ENCODE measurements at regions of chr17 and their contacts with region 1.

Region 1: GRCh38 chr17:57833179-57833939 is 16.5 kb downstream of the MRPS23 start:
- DNase-seq: peak; percentile 55 to 74
- ATAC-seq: peak; percentile 74 to 91 (median 86)
- H3K4me3 ChIP-seq: peak overlapping the region in 9 of 10 donors; percentile 8 to 53 (median 50)
- H3K27ac ChIP-seq: peak overlapping the region; percentile 65 to 91 (median 84)
- H3K4me1 ChIP-seq: peaks cover 0 to 52% (median 20%) of the 10 kb centered on the region in 9 donors
- H3K27me3 ChIP-seq: no peaks in the 10 kb centered on the region
- CTCF ChIP-seq: peak; percentile 82 to 97 (median 92)

Region 2: GRCh38 chr17:56774650-56775049 is 1058.7 kb before region 1 on chr17:
- intact Hi-C with region 1: no loop called
- DNase-seq: no peak
- ATAC-seq: no peak
- H3K4me3 ChIP-seq: no peak overlapping the region
- H3K27ac ChIP-seq: no peak overlapping the region
- H3K4me1 ChIP-seq: peaks cover 0 to 3% (median 1%) of the 10 kb centered on the region in 9 donors
- H3K27me3 ChIP-seq: peaks cover 0 to 46% (median 22%) of the 10 kb centered on the region in 7 donors
- CTCF ChIP-seq: no peak

Region 3: GRCh38 chr17:57130761-57131461 is 702.4 kb before region 1 on chr17:
- intact Hi-C with region 1: loop called in 9 of 10 experiments (anchors 5 to 10 kb)
- DNase-seq: peak; percentile 76 to 88
- ATAC-seq: peak; percentile 91 to 96 (median 94)
- H3K4me3 ChIP-seq: peak overlapping the region in 1 of 10 donors; percentile 11
- H3K27ac ChIP-seq: no peak overlapping the region
- H3K4me1 ChIP-seq: peaks cover 0 to 5% (median 0%) of the 10 kb centered on the region in 9 donors
- H3K27me3 ChIP-seq: no peaks in the 10 kb centered on the region
- CTCF ChIP-seq: peak; percentile 80 to 95 (median 91)

Region 4: GRCh38 chr17:57255776-57256681 is 577.3 kb before region 1 on chr17 and contains the start of gene MSI2:
- intact Hi-C with region 1: loop called in 1 of 10 experiments (anchors 10 kb)
- DNase-seq: peak; percentile 94 to 95
- ATAC-seq: peak; percentile 88 to 94 (median 92)
- H3K4me3 ChIP-seq: peak within 1 kb of the TSS; percentile 75 to 97 (median 93)
- H3K27ac ChIP-seq: peak within 1 kb of the TSS; percentile 88 to 99 (median 97)
- H3K4me1 ChIP-seq: peaks cover 0 to 38% (median 20%) of the 10 kb centered on the region in 9 donors
- H3K27me3 ChIP-seq: peaks cover 0 to 4% (median 0%) of the 10 kb centered on the region in 7 donors
- CTCF ChIP-seq: peak in 1 of 9 donors; percentile 5
- total RNA-seq, gene MSI2: 94.2 to 135 (median 121) TPM

Region 5: DNA sequence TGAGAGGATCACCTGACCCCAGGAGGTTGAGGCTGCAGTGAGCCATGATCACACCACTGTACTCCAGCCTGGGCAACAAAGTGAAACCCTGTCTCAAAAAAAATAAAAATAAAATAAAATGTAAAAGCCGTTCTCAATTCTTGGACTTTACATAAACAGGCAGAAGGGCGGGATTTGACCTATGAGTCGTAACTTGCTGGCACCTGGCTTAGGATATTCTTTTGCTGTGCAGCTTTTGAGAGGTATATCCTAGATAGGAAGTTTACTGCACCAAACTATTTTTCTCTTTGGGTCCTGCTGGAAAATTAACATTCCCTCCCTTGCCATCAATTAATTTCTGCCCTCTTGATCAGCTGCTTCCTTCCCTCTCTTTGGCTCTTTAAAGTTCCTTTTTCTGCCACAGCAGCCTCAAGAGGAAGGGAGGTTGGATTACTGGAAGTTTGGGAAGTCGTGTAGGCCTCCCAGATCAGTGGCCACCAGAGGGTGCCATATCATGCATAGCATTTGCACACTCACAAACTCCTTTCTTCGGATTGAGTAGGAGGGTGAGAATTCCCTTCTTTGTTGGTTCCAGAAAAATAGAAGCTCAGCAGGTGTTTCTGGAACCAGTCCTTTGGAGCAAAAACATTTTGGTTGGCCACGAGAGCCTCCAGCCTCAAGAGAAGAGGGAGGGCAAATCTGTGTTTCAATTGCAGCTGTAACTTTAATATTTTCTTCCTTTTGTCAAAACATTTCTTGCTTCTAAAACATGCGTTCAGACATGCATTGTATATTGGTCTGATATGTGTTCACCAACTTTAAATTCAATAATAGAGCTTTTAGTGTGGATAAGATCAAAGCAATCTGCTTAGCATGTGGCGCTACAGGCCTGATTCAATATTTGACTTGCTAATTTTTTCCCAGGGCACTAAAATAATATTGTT is 235.6 kb before region 1 on chr17:
- intact Hi-C with region 1: loop called in 7 of 10 experiments (anchors 5 to 10 kb)
- DNase-seq: peak; percentile 57 to 81
- ATAC-seq: peak in 7 of 8 donors; percentile 39 to 80 (median 71)
- H3K4me3 ChIP-seq: no peak overlapping the region
- H3K27ac ChIP-seq: peak overlapping the region in 8 of 10 donors; percentile 5 to 65 (median 58)
- H3K4me1 ChIP-seq: peaks cover 0 to 57% (median 34%) of the 10 kb centered on the region in 9 donors
- H3K27me3 ChIP-seq: no peaks in the 10 kb centered on the region
- CTCF ChIP-seq: peak; percentile 67 to 93 (median 85)

Region 6: GRCh38 chr17:57671667-57672632 is 161.4 kb before region 1 on chr17:
- intact Hi-C with region 1: loop called in 2 of 10 experiments (anchors 10 kb)
- DNase-seq: peak; percentile 77 to 81
- ATAC-seq: peak; percentile 89 to 96 (median 92)
- H3K4me3 ChIP-seq: no peak overlapping the region
- H3K27ac ChIP-seq: peak overlapping the region in 5 of 10 donors; percentile 20 to 52 (median 26)
- H3K4me1 ChIP-seq: peaks cover 0 to 37% (median 10%) of the 10 kb centered on the region in 9 donors
- H3K27me3 ChIP-seq: no peaks in the 10 kb centered on the region
- CTCF ChIP-seq: peak; percentile 80 to 98 (median 97)

Region 7: DNA sequence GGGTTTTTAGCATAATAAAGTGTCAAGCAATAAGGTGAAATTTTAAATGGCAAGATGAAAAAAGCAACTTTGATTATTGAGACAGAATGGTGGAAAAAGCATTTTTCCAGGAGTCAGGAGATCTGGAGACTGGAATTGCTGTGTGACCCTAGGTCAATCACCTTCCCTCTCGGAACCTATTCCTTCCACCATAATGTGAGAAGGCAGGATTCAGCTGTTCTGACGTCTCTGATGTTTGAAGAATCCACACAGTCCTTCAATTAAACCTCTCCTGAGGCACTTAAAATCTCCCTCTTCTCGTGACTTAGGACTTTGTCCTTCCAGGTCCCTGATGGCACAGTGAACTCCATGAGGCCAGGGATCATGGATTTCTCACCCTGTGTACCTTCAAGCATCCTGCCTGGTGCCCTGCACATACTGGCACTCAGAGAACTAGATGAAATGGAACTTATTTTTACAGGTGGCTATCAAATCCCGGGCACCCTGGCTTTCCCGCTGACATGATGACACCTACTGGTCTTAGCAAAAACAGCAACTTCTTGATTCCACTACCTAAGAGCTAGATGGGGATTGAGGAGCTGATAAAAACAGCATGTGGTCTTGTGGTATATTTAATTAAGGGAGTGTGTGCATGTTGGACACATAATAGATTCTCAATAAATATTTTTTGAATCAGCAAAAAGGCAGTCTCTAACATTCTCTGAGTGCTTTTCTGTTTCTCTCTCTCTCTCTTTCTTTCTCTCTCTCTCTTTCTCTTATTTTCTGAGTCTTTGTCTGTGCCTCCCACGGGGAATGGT is 85.9 kb before region 1 on chr17:
- intact Hi-C with region 1: loop called in 1 of 10 experiments (anchors 10 kb)
- DNase-seq: peak in 1 of 2 donors; percentile 28
- ATAC-seq: peak in 7 of 8 donors; percentile 32 to 75 (median 56)
- H3K4me3 ChIP-seq: no peak overlapping the region
- H3K27ac ChIP-seq: no peak overlapping the region
- H3K4me1 ChIP-seq: peaks cover 0 to 11% (median 0%) of the 10 kb centered on the region in 9 donors
- H3K27me3 ChIP-seq: no peaks in the 10 kb centered on the region
- CTCF ChIP-seq: peak; percentile 42 to 87 (median 77)

Region 8: GRCh38 chr17:57849874-57850754 is 16.8 kb after region 1 on chr17 and contains the start of gene MRPS23:
- intact Hi-C with region 1: loop called in 2 of 10 experiments (anchors 2 kb)
- DNase-seq: peak; percentile 97 to 98
- ATAC-seq: peak; percentile 85 to 94 (median 90)
- H3K4me3 ChIP-seq: peak within 1 kb of the TSS; percentile 53 to 94 (median 87)
- H3K27ac ChIP-seq: peak within 1 kb of the TSS; percentile 86 to 98 (median 90)
- H3K4me1 ChIP-seq: peaks cover 13 to 66% (median 47%) of the 10 kb centered on the region in 9 donors
- H3K27me3 ChIP-seq: no peaks in the 10 kb centered on the region
- CTCF ChIP-seq: peak in 1 of 9 donors; percentile 6
- total RNA-seq, gene MRPS23: 61.2 to 103 (median 75.5) TPM

Region 9: GRCh38 chr17:57927048-57927723 is 93.8 kb after region 1 on chr17:
- intact Hi-C with region 1: no loop called
- DNase-seq: no peak
- ATAC-seq: peak; percentile 25 to 82 (median 70)
- H3K4me3 ChIP-seq: peak overlapping the region in 1 of 10 donors; percentile 12
- H3K27ac ChIP-seq: peak overlapping the region in 9 of 10 donors; percentile 22 to 75 (median 62)
- H3K4me1 ChIP-seq: peaks cover 29 to 95% (median 85%) of the 10 kb centered on the region in 9 donors
- H3K27me3 ChIP-seq: no peaks in the 10 kb centered on the region
- CTCF ChIP-seq: no peak